Panc1 (cell line): ENCODE measurements at regions of chr6 and their contacts with region 1.

Region 1: DNA sequence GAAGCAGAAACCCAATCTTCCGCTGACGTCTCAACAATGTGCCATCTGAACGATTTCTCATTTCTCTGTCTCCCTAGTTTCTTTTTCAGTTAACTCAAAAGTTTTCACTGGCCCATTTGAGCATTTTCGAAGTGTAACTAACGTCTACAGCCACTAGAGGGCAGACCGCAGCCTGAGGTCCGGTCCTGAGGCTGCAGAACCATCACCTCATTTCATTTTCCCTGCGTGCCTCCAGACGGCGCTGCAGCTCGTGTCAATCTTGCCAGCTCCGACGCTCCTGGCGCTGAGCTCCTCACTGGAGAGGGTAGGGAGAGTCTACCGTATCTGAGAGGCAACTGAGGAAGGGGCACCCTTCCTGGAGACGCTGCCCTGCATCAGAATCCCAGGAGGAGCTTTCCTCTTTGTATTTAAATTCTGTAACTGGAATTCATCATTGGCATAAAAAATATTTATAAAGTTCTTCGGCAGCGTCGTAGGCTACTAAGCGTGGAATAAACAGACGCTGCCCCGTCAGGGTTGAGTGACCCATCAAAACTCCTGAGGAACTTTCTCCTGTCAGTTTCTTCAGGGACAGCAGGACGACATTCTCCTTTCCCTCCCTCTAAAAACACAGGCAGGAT is 28.5 kb upstream of the DTNBP1 start:
- DNase-seq: peak; percentile 75
- ATAC-seq: peak; percentile 100
- H3K4me3 ChIP-seq: peak overlapping the region; percentile 37 to 64
- H3K27ac ChIP-seq: peak overlapping the region; percentile 58; the same call in 1 of the 2 replicates
- H3K4me1 ChIP-seq: peaks cover 3% of the 10 kb centered on the region; the same call in 1 of the 2 replicates
- H3K27me3 ChIP-seq: peaks cover under 1% of the 10 kb centered on the region; the same call in 1 of the 2 replicates
- CTCF ChIP-seq: peak; percentile 100

Region 2: DNA sequence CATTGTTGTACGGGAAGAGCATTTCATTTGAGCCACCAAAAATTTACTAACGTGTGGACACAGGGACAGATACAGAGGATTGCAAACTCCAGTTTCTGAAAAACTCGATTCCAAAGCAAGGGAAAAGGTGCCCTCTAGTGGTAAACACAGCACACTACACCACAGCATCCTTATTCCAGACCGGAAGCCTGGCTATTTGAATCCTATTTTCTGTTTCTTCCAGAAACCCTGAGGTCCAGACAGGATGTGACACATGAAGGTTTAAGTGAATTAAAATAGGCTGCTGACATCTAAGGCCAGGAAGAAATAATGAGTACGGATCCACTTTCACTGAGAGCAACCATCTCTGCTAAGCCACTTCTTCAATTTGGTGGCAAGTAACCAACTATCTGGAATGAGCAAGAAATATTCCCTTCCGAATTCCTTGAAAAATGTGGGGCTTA is 515.3 kb after region 1 on chr6:
- CTCF ChIA-PET with region 1: interaction called, 6 read pairs
- POLR2A ChIA-PET with region 1: no interaction called
- in situ Hi-C with region 1: no loop called
- intact Hi-C with region 1: loop called (anchors 1 kb)
- DNase-seq: peak; percentile 75
- ATAC-seq: peak; percentile 86
- H3K4me3 ChIP-seq: no peak overlapping the region
- H3K27ac ChIP-seq: no peak overlapping the region
- H3K4me1 ChIP-seq: no peaks in the 10 kb centered on the region
- H3K27me3 ChIP-seq: peaks cover 11% of the 10 kb centered on the region
- CTCF ChIP-seq: peak; percentile 92